Activated naive CD4-positive, alpha-beta T cell treated with anti-CD3 and anti-CD28 coated beads for 36 hours (primary cell): ENCODE measurements at regions of chr17 and their contacts with region 1.

Region 1: DNA sequence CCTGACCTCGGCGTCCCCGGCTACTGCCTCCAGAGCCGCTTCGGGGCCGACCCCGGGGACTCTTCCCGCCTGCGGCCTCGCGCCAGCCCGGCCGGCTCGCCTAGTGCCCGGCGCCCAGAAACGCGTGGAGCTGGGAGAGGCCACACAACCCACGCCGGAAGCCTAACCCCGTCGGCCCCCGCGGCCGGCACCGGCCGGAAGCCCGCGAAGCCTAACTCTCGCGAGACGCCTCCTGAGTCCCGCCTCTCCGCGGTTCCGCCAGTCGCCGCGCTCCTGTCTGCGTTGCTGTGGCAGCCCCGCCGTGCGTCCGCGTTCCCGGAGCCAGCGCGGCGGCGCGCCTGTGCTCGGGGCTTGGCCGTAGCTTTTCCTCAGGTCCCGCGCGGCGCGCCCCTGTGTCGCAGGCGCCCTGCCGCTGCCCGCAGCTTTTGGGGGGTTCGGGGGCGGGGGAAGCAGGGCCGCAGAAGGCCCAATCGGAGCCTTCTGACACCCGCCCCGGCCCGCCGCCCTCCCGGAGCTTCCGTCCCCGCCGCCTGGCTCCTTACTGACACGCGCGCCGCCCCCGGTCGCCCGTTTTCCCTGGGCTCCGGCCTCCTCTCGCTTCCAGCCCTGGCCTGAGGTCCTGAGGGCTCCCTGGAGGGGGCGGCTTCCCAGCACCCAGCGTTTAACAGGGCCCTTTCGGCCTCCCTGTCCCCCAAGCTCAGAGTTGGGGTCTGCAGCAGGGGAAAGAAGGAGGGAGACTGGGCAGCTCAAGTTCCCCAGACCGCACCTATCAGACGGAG is 21.7 kb downstream of the NPTX1 start:
- DNase-seq: peak; percentile 97
- H3K4me3 Mint-ChIP-seq: peak overlapping the region; percentile 98
- H3K27ac Mint-ChIP-seq: peak overlapping the region; percentile 98
- H3K4me1 Mint-ChIP-seq: peaks cover 18% of the 10 kb centered on the region
- H3K27me3 Mint-ChIP-seq: peaks cover 6% of the 10 kb centered on the region

Region 2: DNA sequence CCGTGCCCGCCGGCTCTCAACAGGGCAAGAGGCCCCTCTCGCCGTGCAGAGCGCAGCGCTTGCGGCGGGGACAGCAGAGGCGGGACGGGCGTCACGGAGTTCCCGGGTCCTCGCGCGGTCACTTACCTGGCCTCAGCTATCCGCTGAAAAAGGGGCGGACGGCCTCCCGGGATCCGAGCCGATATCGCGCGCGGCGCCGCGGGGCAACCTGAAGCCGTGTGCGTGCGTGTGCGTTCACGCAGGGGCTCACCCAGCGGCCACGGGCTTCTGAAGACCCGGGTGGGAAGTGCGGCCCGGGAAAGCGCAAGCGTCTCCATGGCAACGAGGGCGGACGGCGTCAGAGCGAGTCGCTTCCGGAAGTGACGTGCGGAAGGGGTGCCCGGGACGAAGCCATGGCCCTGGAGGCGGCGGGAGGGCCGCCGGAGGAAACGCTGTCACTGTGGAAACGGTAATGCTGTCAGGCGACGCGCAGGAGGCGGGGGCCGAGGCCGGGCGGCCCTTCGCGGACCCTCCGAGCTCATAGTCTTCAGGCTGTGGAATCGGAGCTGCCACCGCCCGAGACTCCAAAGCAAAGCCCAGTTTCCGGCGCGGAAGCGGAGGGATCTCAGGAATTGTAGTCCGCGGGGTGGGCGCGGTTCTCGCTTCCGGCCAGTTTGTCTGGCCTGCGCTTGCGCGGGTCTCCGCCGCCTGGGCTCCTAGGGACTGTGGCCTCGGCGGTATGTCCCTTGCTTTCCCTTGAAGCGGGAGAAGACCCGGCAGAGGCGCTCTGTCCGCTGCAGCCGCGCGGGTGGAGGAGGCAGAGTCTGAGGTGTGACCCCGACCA is 39.7 kb before region 1 on chr17 and contains the start of gene ENDOV:
- CTCF ChIA-PET with region 1: no interaction called
- intact Hi-C with region 1: loop called (anchors 1 kb)
- DNase-seq: peak; percentile 93
- H3K4me3 Mint-ChIP-seq: peak within 1 kb of the TSS; percentile 83
- H3K27ac Mint-ChIP-seq: no peak within 1 kb of the TSS
- H3K4me1 Mint-ChIP-seq: peaks cover 20% of the 10 kb centered on the region
- H3K27me3 Mint-ChIP-seq: peaks cover 9% of the 10 kb centered on the region
- total RNA-seq, gene ENDOV: 9.0 to 11.7 TPM

Region 3: DNA sequence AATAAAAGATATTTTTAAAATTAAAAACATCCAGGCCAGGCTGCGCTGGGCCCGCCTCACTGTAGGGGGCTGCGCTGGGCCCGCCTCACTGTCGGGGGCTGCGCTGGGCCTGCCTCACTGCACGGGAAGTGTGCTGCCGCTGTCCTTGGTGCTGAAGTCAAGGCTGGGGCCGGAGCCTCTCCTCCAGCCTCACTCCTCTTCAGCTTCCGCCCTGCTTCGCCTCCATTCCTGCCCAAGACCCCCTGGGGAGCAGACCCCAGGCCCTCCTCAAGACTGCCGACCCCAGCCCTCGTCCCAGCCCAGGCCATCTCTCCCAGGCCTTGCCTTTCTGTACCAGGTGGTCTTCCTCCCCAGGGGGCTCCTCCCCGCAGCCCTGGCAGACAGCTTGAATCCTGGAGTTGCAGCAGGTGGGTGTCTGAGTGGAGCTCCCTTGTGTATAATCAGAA is 13.6 kb before region 1 on chr17:
- CTCF ChIA-PET with region 1: no interaction called
- intact Hi-C with region 1: loop called (anchors 1 kb)
- DNase-seq: peak; percentile 66
- H3K4me3 Mint-ChIP-seq: no peak overlapping the region
- H3K27ac Mint-ChIP-seq: no peak overlapping the region
- H3K4me1 Mint-ChIP-seq: no peaks in the 10 kb centered on the region
- H3K27me3 Mint-ChIP-seq: no peaks in the 10 kb centered on the region

Region 4: DNA sequence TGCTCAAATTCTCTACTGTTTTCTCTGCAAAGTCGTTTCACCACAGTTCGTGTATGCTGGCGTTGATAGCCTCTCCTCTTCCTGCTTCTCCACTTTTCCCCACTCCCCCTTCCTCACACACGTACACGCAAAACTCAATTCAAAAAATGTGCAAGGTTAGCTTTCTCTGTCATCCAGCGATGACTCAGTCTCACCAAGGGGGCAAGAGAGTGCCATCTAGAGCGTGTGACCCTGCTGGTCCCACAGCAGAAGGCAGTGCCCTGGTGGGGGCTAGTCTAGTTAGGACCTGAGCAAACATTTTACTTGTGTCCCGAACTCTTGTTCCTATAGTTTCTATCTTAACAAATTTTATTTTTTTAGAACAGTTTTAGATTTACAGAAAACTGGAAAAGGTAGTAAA is 415.7 kb after region 1 on chr17:
- CTCF ChIA-PET with region 1: no interaction called
- intact Hi-C with region 1: loop called (anchors 1 kb)
- DNase-seq: peak; percentile 57
- H3K4me3 Mint-ChIP-seq: peak overlapping the region; percentile 14
- H3K27ac Mint-ChIP-seq: peak overlapping the region; percentile 76
- H3K4me1 Mint-ChIP-seq: peaks cover 74% of the 10 kb centered on the region
- H3K27me3 Mint-ChIP-seq: no peaks in the 10 kb centered on the region

Region 5: GRCh38 chr17:80981062-80981902 is 526.5 kb after region 1 on chr17:
- CTCF ChIA-PET with region 1: no interaction called
- intact Hi-C with region 1: no loop called
- DNase-seq: peak; percentile 27
- H3K4me3 Mint-ChIP-seq: no peak overlapping the region
- H3K27ac Mint-ChIP-seq: no peak overlapping the region
- H3K4me1 Mint-ChIP-seq: peaks cover 12% of the 10 kb centered on the region
- H3K27me3 Mint-ChIP-seq: no peaks in the 10 kb centered on the region